ENCODE measurements at regions of chr14 and their contacts with region 1.

Region 1: DNA sequence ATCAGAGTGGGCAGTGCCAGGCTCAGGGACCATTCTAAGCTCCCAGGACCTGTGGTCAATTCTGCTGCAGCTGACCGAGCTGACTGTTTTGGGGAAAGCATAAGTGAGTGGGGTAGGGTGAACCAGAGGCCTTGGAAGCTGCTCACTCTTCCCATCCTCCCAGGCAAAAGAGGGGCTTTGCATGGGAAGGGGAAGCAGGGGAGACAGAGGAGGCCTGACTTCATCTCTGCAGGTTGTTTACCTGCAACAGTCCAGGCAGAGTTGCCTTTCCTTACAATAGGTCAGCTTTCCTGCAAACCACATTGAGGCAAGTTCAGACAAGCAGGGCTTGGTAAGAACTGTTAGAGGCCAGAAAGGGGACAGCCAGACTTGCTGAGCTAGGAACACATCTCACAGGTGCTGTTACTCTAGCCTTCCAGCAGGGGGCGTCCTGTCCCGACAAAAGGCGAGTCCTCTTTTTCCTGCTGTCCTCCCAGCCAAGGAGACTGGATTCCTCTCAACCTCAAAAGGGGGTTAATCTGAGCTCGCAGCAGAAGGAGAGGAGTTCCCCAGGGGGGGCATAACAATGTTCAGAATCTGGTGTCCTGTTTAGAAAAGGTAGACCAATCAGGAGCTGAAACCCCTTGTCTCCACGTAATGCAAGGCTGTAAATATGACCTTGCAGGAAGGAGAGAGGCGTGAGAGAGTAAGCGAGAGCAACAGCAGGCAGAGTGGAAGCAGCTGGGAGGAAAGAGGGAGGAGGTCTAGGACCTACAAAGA is 4.3 kb upstream of the DHRS2 start:
- DNase-seq: peak; percentile 72 to 93
- H3K4me3 ChIP-seq: no peak overlapping the region
- H3K27ac ChIP-seq: no peak overlapping the region
- H3K4me1 ChIP-seq: no peaks in the 10 kb centered on the region; a peak in 1 of 7 replicates
- H3K27me3 ChIP-seq: no peaks in the 10 kb centered on the region
- CTCF ChIP-seq: peak; percentile 92 to 99 (median 93)
- EP300 ChIP-seq: no peak
- POLR2A ChIP-seq: no peak
- RAD21 ChIP-seq: peak; percentile 92 to 93

Region 2: DNA sequence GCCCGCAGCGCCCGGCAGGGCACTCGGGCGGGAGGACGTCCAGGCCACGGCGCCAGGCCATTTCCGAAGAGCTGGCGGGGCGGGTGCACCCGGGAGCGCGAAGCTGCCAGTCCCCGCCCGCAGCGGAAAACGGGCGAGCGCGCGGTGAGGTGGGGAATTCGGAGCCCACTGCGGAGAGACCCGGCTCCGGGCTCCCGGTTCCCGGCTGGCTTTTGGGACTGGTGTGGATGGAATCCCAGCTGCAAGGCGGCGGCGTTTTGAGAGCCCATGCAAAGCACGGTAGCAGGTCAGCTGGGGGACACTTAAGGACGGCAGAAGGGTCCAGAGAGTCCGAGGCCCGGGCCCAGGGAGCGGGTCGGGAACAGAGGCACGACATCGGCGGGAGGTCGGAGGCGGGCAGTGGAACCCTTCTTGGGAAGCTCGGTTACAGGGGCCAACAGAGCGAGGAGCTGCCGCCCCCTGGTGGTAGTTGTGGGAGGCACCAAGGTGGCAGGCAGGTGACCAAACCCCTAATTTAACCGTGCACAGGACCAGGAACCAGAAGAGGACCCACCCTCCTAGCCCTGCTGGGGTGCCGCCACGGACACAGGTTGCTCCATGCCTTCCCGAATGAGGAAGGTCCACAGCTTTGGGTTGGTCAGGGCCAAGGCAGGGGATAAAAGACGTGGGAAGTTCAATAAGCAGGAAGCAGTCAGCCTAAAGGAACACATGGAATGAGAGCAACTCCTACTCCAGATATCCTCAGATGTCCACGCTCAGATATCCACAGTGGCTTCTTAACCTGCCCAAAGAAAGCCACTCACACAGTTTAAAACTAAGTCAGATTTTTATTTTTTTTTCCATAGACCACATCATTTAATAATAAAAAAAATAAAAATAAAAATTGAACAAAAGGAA is 573.9 kb before region 1 on chr14:
- CTCF ChIA-PET with region 1: no interaction called
- POLR2A ChIA-PET with region 1: no interaction called
- DNase-seq: peak; percentile 86 to 98
- H3K4me3 ChIP-seq: peak overlapping the region; percentile 34 to 82 (median 65)
- H3K27ac ChIP-seq: peak overlapping the region; percentile 64; the same call in 1 of the 2 replicates
- H3K4me1 ChIP-seq: peaks cover 0 to 15% (median 4%) of the 10 kb centered on the region in 4 experiments; a peak in 4 of 7 replicates
- H3K27me3 ChIP-seq: no peaks in the 10 kb centered on the region; a peak in 1 of 7 replicates
- CTCF ChIP-seq: peak; percentile 87 to 96 (median 95)
- EP300 ChIP-seq: no peak
- POLR2A ChIP-seq: peak in 1 of 2 experiments; percentile 61; a peak in 2 of 3 replicates
- RAD21 ChIP-seq: peak; percentile 79 to 80

Region 3: GRCh38 chr14:23621204-23621931 is 10.5 kb before region 1 on chr14:
- CTCF ChIA-PET with region 1: interaction called, 36 read pairs
- POLR2A ChIA-PET with region 1: no interaction called
- DNase-seq: no peak
- H3K4me3 ChIP-seq: no peak overlapping the region
- H3K27ac ChIP-seq: no peak overlapping the region
- H3K4me1 ChIP-seq: no peaks in the 10 kb centered on the region
- H3K27me3 ChIP-seq: no peaks in the 10 kb centered on the region
- CTCF ChIP-seq: no peak
- EP300 ChIP-seq: no peak
- POLR2A ChIP-seq: no peak
- RAD21 ChIP-seq: no peak

Region 4: GRCh38 chr14:23665375-23666192 is 33.7 kb after region 1 on chr14:
- CTCF ChIA-PET with region 1: interaction called, 49 read pairs
- POLR2A ChIA-PET with region 1: no interaction called
- DNase-seq: peak; percentile 15 to 57
- H3K4me3 ChIP-seq: no peak overlapping the region
- H3K27ac ChIP-seq: no peak overlapping the region
- H3K4me1 ChIP-seq: no peaks in the 10 kb centered on the region
- H3K27me3 ChIP-seq: no peaks in the 10 kb centered on the region
- CTCF ChIP-seq: peak; percentile 42 to 76 (median 76)
- EP300 ChIP-seq: no peak
- POLR2A ChIP-seq: no peak
- RAD21 ChIP-seq: peak; percentile 80 to 85

Region 5: GRCh38 chr14:23704890-23705289 is 73.0 kb after region 1 on chr14:
- CTCF ChIA-PET with region 1: interaction called, 10 read pairs
- POLR2A ChIA-PET with region 1: no interaction called
- DNase-seq: no peak
- H3K4me3 ChIP-seq: no peak overlapping the region
- H3K27ac ChIP-seq: no peak overlapping the region
- H3K4me1 ChIP-seq: no peaks in the 10 kb centered on the region
- H3K27me3 ChIP-seq: no peaks in the 10 kb centered on the region
- CTCF ChIP-seq: no peak
- EP300 ChIP-seq: no peak
- POLR2A ChIP-seq: no peak
- RAD21 ChIP-seq: no peak

Region 6: DNA sequence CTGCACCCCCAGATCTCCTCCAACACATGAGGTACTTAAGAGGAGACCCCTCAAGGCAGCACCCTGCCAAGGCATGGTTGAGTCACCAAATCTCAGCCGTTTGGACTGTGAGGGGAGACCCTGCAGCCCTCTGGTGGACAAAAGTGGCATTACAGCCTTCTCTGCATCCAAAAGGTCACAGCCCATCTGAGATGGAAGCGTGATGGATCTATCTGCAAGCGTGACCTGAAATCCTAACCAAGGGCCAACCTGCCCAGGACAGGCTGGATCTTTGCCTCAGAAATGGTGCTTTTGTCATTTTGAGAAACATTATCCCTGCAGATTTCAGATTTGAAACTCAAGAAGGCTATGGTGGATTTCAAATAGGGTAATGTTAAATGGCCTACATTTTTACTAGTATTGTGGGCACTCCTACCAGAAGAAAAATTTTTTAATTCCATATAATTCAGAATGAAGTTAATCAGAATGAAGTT is 298.0 kb after region 1 on chr14:
- CTCF ChIA-PET with region 1: interaction called, 44 read pairs
- POLR2A ChIA-PET with region 1: no interaction called
- DNase-seq: peak; percentile 34 to 97
- H3K4me3 ChIP-seq: no peak overlapping the region
- H3K27ac ChIP-seq: no peak overlapping the region
- H3K4me1 ChIP-seq: no peaks in the 10 kb centered on the region
- H3K27me3 ChIP-seq: no peaks in the 10 kb centered on the region
- CTCF ChIP-seq: peak; percentile 86 to 93 (median 92)
- EP300 ChIP-seq: no peak
- POLR2A ChIP-seq: no peak
- RAD21 ChIP-seq: peak; percentile 82 to 84